Sigmoid colon (tissue), 7 donors: ENCODE measurements at regions of chr9 and their contacts with region 1.

Region 1: GRCh38 chr9:88741335-88741734 is 206.4 kb downstream of the NXNL2 start:
- DNase-seq: no peak
- H3K4me3 ChIP-seq: no peak overlapping the region
- H3K27ac ChIP-seq: no peak overlapping the region
- H3K4me1 ChIP-seq: peaks cover 2 to 41% (median 38%) of the 10 kb centered on the region in 4 donors
- H3K27me3 ChIP-seq: no peaks in the 10 kb centered on the region
- CTCF ChIP-seq: peak in 1 of 4 experiments; percentile 16
- EP300 ChIP-seq: no peak
- POLR2A ChIP-seq: no peak

Region 2: GRCh38 chr9:88593537-88594185 is 147.7 kb before region 1 on chr9:
- intact Hi-C with region 1: loop called (anchors 5 kb)
- DNase-seq: no peak
- H3K4me3 ChIP-seq: no peak overlapping the region
- H3K27ac ChIP-seq: no peak overlapping the region
- H3K4me1 ChIP-seq: no peaks in the 10 kb centered on the region
- H3K27me3 ChIP-seq: no peaks in the 10 kb centered on the region
- CTCF ChIP-seq: peak; percentile 54 to 67 (median 65)
- EP300 ChIP-seq: no peak
- POLR2A ChIP-seq: no peak